RWPE1 (cell line): ENCODE measurements at regions of chr12 and their contacts with region 1.

Region 1: GRCh38 chr12:84706374-84706773 is 206.2 kb downstream of the SLC6A15 start:
- DNase-seq: no peak
- H3K27ac ChIP-seq: no peak overlapping the region
- CTCF ChIP-seq: no peak

Region 2: DNA sequence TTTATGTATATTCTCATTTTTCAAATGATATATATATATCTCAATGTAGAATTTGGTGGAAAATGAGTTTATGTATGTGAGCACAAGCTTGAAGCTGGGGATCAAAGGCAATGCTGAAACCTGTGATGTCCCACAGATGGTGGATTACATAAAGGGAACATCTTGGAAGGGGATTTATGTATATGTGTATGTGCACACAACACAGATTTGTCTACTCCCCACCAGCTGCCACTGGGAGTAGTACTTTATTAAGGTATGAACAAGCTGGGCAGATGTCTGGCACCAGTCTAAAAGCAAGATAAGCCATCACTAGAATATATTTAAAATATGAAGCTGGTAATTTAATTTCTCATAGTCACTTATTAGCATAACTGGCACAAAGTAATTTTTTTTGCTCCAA is 689.4 kb before region 1 on chr12:
- CTCF ChIA-PET with region 1: interaction called, 10 read pairs
- POLR2A ChIA-PET with region 1: no interaction called
- DNase-seq: no peak
- H3K27ac ChIP-seq: no peak overlapping the region
- CTCF ChIP-seq: no peak

Region 3: DNA sequence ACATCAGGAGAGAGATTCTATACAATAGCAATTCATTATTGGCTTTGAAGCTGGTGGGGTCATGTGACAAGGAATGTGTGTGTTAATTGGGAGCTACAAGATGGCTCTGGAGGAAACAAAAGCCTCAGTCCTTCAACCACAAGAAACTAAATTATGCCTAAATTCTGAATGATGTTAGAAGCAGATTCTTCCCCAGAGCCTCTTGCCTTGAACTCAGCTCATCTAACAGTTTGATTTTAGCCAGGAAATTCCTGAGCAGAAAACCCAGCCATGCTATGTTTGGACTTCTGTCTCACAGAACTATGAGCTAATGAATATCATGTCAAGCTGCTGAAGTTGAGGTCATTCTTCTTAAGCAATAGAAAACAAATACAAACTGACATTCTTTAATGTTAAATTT is 68.4 kb before region 1 on chr12:
- CTCF ChIA-PET with region 1: no interaction called
- POLR2A ChIA-PET with region 1: no interaction called
- DNase-seq: no peak
- H3K27ac ChIP-seq: no peak overlapping the region
- CTCF ChIP-seq: no peak

Region 4: GRCh38 chr12:84694116-84694515 is 12.3 kb before region 1 on chr12:
- CTCF ChIA-PET with region 1: no interaction called
- POLR2A ChIA-PET with region 1: no interaction called
- DNase-seq: no peak
- H3K27ac ChIP-seq: no peak overlapping the region
- CTCF ChIP-seq: no peak